ENCODE measurements at regions of chr12 and their contacts with region 1.

Region 1: DNA sequence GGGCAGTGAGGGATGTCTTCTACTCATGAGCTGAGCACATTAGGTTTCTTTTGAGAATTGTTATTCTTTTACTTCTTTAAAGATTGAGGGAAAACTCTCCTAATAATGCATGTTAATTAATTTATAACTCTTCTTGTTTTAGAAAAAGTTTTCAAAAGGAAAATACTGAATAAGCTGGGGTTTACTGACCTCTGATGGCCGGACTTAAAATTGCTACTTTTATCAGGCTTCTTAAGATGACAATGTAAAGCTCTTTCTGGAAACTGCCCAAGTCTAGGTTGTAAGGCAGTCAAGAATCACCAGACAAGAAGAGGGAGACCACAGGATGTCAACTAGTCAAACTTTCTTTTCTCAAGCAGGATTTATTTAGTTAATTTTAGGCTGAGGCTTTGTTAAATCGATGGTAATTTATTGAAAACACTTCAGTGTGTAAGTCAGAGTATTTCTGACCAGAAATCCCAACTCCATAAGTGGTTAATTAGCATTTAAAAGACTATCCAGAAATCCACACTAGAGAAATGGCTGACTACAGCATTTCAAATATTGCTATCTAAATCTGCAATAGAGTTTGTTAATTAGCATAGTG is 82.1 kb downstream of the AVPR1A start:
- DNase-seq: peak; percentile 72
- H3K4me3 Mint-ChIP-seq: no peak overlapping the region
- H3K27ac Mint-ChIP-seq: no peak overlapping the region
- H3K4me1 Mint-ChIP-seq: no peaks in the 10 kb centered on the region
- H3K27me3 Mint-ChIP-seq: no peaks in the 10 kb centered on the region
- CTCF ChIP-seq: peak; percentile 55

Region 2: DNA sequence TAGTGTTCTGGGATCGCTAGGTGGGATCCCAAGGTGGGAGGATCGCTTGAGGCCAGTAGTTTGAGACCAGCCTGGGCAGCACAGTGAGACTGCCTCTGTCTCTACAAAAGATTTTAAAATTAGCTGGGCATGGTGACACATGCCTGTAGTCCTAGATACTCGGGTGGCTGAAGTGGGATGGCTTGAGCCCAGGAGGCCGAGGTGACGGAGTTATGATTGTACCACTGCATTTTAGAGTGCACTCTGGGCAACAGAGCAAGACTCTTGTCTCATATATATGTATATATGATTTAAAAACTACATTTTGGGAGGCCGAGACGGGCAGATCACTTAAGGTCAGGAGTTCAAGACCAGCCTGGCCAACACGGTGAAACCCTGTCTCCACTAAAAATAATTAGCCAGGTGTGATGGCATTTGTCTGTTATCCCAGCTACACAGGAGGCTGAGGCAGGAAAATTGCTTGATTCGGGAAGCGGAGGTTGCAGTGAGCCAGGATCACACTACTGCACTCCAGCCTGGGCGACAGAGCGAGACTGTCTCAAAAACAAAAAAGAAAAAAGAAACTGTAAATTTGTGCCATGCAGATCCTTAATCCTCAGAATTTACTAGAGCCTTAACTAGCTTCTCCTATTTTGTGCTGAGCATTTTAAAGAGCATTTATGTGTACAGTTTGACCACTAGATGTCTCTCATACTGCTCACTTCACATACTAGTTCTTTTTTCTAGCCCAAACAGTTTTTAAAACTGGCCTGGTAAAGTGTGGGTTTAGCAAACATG is 487.5 kb before region 1 on chr12:
- CTCF ChIA-PET with region 1: interaction called, 16 read pairs
- POLR2A ChIA-PET with region 1: no interaction called
- intact Hi-C with region 1: loop called (anchors 1 kb)
- DNase-seq: peak; percentile 53
- H3K4me3 Mint-ChIP-seq: no peak overlapping the region
- H3K27ac Mint-ChIP-seq: no peak overlapping the region
- H3K4me1 Mint-ChIP-seq: no peaks in the 10 kb centered on the region
- H3K27me3 Mint-ChIP-seq: no peaks in the 10 kb centered on the region
- CTCF ChIP-seq: peak; percentile 49

Region 3: GRCh38 chr12:62799126-62799736 is 269.7 kb before region 1 on chr12:
- CTCF ChIA-PET with region 1: interaction called, 67 read pairs
- POLR2A ChIA-PET with region 1: no interaction called
- intact Hi-C with region 1: loop called (anchors 2 kb)
- DNase-seq: peak; percentile 74
- H3K4me3 Mint-ChIP-seq: no peak overlapping the region
- H3K27ac Mint-ChIP-seq: no peak overlapping the region
- H3K4me1 Mint-ChIP-seq: no peaks in the 10 kb centered on the region
- H3K27me3 Mint-ChIP-seq: no peaks in the 10 kb centered on the region
- CTCF ChIP-seq: peak; percentile 86

Region 4: GRCh38 chr12:62934799-62935674 is 133.9 kb before region 1 on chr12 and contains the start of gene PPM1H:
- CTCF ChIA-PET with region 1: interaction called, 27 read pairs
- POLR2A ChIA-PET with region 1: interaction called, 5 read pairs
- intact Hi-C with region 1: loop called (anchors 10 kb)
- DNase-seq: peak; percentile 48
- H3K4me3 Mint-ChIP-seq: peak within 1 kb of the TSS; percentile 84
- H3K27ac Mint-ChIP-seq: peak within 1 kb of the TSS; percentile 61
- H3K4me1 Mint-ChIP-seq: peaks cover 13% of the 10 kb centered on the region
- H3K27me3 Mint-ChIP-seq: peaks cover 20% of the 10 kb centered on the region
- CTCF ChIP-seq: peak; percentile 40
- total RNA-seq, gene PPM1H: 0.49 and 2.0 TPM in 2 replicates

Region 5: GRCh38 chr12:63079791-63080502 is 11.0 kb after region 1 on chr12:
- CTCF ChIA-PET with region 1: interaction called, 13 read pairs
- POLR2A ChIA-PET with region 1: no interaction called
- intact Hi-C with region 1: no loop called
- DNase-seq: no peak
- H3K4me3 Mint-ChIP-seq: no peak overlapping the region
- H3K27ac Mint-ChIP-seq: no peak overlapping the region
- H3K4me1 Mint-ChIP-seq: no peaks in the 10 kb centered on the region
- H3K27me3 Mint-ChIP-seq: no peaks in the 10 kb centered on the region
- CTCF ChIP-seq: no peak